ACHN (cell line): ENCODE measurements at regions of chr7 and their contacts with region 1.

Region 1: GRCh38 chr7:18693406-18693805 is 197.9 kb downstream of the HDAC9 start:
- DNase-seq: peak; percentile 55

Region 2: GRCh38 chr7:18792871-18793595 is 99.6 kb after region 1 on chr7:
- in situ Hi-C with region 1: loop called (anchors 25 kb)
- DNase-seq: no peak